ENCODE measurements at regions of chrX and their contacts with region 1.

Region 1: GRCh38 chrX:3638280-3638873 is 75.1 kb downstream of the PRKX start:
- DNase-seq: peak; percentile 46
- H3K4me3 Mint-ChIP-seq: no peak overlapping the region
- H3K27ac Mint-ChIP-seq: no peak overlapping the region
- H3K4me1 Mint-ChIP-seq: no peaks in the 10 kb centered on the region
- H3K27me3 Mint-ChIP-seq: no peaks in the 10 kb centered on the region

Region 2: DNA sequence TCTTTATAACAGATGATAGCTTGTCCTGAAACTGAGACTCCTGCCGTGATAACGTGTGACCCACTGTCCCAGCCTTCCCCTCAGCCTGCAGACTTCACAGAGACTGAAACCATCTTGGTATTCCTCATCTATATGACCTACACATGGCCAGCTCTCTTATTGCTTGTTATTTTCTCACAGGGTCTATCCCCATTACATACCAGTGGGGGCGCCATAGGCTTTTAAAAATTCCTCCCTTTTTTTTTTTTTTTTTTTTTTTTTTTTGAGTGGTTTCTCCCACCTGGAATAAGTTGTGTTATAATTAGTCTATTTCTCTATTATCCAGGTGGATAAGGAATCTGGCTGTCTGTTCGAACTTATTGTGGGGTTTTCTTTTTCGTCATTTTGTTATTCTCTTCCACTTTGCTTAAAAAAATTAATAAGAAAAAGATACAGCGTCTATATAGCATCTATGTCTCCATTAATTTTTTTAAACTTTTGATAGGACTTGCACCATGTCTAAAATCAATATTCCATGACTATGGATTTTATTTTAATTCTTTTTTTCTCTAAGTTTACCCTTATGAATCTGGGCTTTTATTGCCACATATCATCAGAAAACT is 762.5 kb before region 1 on chrX:
- CTCF ChIA-PET with region 1: no interaction called
- intact Hi-C with region 1: loop called (anchors 5 kb)
- DNase-seq: no peak
- H3K4me3 Mint-ChIP-seq: no peak overlapping the region
- H3K27ac Mint-ChIP-seq: no peak overlapping the region
- H3K4me1 Mint-ChIP-seq: no peaks in the 10 kb centered on the region
- H3K27me3 Mint-ChIP-seq: peaks cover 6% of the 10 kb centered on the region

Region 3: DNA sequence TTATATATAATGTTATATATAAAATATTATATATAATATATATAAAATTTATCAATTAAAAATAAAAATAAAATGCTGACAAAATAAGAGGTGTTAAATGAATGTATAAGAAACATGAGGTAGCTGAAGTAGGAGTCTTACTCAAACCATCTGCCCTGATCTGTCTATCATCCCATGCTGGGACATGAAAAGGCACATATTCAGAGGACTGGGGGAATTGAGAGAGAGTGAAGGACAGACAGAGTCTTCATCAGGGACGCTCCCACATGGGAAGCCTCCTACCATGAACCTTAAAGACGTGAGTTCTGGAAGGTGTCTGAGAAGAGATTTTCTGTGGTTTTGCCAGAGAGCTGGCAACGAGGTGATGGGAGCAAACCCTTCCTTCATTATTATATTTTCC is 601.2 kb before region 1 on chrX:
- CTCF ChIA-PET with region 1: no interaction called
- intact Hi-C with region 1: loop called (anchors 1 kb)
- DNase-seq: no peak
- H3K4me3 Mint-ChIP-seq: no peak overlapping the region
- H3K27ac Mint-ChIP-seq: no peak overlapping the region
- H3K4me1 Mint-ChIP-seq: no peaks in the 10 kb centered on the region
- H3K27me3 Mint-ChIP-seq: peaks cover 3% of the 10 kb centered on the region

Region 4: DNA sequence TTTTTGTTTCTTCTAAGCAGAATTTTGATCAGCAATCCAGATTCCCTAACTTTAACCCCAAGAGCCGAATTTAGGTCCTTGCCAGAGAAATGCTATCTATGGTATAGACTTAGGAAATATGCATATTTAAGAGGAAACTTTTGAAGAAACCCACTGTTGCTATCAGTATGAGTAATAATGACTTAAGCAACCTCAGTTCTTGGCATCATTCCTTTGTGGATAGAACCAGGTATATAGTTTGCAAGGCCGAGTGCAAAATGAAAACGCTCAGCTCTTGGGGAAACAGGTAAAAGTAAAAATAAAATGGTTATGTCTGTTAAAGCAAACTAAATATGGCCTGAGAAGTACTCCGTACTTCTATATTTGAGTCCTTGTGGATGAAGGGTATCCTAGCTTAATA is 519.0 kb before region 1 on chrX:
- CTCF ChIA-PET with region 1: no interaction called
- intact Hi-C with region 1: loop called (anchors 5 kb)
- DNase-seq: no peak
- H3K4me3 Mint-ChIP-seq: no peak overlapping the region
- H3K27ac Mint-ChIP-seq: no peak overlapping the region
- H3K4me1 Mint-ChIP-seq: no peaks in the 10 kb centered on the region
- H3K27me3 Mint-ChIP-seq: no peaks in the 10 kb centered on the region

Region 5: GRCh38 chrX:3567686-3568085 is 70.7 kb before region 1 on chrX:
- CTCF ChIA-PET with region 1: no interaction called
- intact Hi-C with region 1: no loop called
- DNase-seq: no peak
- H3K4me3 Mint-ChIP-seq: no peak overlapping the region
- H3K27ac Mint-ChIP-seq: no peak overlapping the region
- H3K4me1 Mint-ChIP-seq: no peaks in the 10 kb centered on the region
- H3K27me3 Mint-ChIP-seq: no peaks in the 10 kb centered on the region

Region 6: DNA sequence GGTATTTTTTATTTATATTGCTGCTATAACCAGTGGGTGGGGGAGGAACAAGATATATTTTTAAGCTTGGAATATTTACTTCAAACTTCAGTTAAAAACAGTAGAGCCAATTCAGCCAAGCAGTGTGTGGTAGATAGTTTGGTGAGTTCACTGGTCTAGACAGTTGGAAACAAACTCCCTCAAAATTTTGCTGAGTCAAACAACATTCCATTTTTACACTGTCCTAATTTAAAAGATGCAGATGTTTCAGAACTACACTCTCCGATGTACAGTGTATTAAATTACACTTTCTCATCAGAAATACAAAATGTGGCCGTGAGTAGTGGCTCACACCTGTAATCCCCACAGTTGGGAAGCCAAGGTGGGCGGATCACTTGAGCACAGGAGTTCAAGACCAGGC is 51.8 kb after region 1 on chrX:
- CTCF ChIA-PET with region 1: no interaction called
- intact Hi-C with region 1: no loop called
- DNase-seq: no peak
- H3K4me3 Mint-ChIP-seq: no peak overlapping the region
- H3K27ac Mint-ChIP-seq: no peak overlapping the region
- H3K4me1 Mint-ChIP-seq: peaks cover 25% of the 10 kb centered on the region
- H3K27me3 Mint-ChIP-seq: no peaks in the 10 kb centered on the region